SK-N-SH (cell line): ENCODE measurements at regions of chr12 and their contacts with region 1.

Region 1: DNA sequence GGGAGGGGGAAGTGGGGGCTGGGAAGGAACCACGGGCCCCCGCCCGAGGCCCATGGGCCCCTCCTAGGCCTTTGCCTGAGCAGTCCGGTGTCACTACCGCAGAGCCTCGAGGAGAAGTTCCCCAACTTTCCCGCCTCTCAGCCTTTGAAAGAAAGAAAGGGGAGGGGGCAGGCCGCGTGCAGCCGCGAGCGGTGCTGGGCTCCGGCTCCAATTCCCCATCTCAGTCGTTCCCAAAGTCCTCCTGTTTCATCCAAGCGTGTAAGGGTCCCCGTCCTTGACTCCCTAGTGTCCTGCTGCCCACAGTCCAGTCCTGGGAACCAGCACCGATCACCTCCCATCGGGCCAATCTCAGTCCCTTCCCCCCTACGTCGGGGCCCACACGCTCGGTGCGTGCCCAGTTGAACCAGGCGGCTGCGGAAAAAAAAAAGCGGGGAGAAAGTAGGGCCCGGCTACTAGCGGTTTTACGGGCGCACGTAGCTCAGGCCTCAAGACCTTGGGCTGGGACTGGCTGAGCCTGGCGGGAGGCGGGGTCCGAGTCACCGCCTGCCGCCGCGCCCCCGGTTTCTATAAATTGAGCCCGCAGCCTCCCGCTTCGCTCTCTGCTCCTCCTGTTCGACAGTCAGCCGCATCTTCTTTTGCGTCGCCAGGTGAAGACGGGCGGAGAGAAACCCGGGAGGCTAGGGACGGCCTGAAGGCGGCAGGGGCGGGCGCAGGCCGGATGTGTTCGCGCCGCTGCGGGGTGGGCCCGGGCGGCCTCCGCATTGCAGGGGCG is at the start of gene GAPDH:
- DNase-seq: peak; percentile 94
- H3K4me3 ChIP-seq: peak within 1 kb of the TSS; percentile 93 to 97
- H3K27ac ChIP-seq: peak within 1 kb of the TSS; percentile 96 to 98
- H3K4me1 ChIP-seq: peaks cover 15 to 34% of the 10 kb centered on the region in 2 experiments; a peak in 3 of 4 replicates
- H3K27me3 ChIP-seq: no peaks in the 10 kb centered on the region
- CTCF ChIP-seq: no peak
- EP300 ChIP-seq: peak in 1 of 2 experiments; percentile 57; a peak in 2 of 4 replicates
- RAD21 ChIP-seq: no peak
- polyA plus RNA-seq, gene GAPDH: 7,875 and 8,077 TPM in 2 replicates

Region 2: DNA sequence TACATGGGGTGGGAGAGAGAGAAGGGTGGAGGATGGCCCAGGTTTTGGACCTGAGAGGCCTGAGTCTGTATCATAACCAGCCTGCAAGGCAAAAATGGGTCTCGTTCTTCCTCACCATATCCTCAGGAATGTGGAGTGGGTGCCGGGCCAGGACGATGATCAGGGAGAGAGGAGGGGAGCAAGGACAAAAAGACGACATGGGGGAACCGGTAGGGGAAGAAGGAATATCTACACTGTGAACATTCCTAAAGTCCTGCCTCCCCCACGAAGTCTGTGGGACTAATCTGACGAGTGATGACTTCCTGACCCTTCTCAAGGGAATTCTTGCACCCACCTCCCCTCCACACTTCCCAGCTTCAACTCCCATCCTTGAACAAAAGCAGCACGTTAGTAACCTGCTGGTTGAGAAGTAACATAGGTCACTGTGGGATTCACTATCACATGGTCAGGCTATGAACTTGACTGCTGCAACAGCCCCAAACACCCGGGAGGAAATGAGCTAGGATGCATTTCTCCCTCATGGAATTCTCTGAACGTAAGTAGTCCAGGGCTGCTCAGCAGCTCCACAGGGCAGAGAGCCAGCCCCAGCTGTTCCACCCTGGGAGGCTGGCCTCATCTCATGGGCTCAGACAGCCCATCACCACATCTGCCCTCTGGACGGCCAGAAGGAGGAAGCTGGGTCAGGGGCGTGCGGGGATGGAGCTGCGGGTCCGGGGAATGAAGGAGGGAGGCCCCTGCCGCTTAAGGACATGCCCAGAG is 372.8 kb before region 1 on chr12:
- CTCF ChIA-PET with region 1: no interaction called
- POLR2A ChIA-PET with region 1: no interaction called
- DNase-seq: peak; percentile 36
- H3K4me3 ChIP-seq: no peak overlapping the region
- H3K27ac ChIP-seq: peak overlapping the region in 1 of 2 experiments; percentile 67; a peak in 1 of 4 replicates
- H3K4me1 ChIP-seq: peaks cover 0 to 27% of the 10 kb centered on the region in 2 experiments; a peak in 1 of 4 replicates
- H3K27me3 ChIP-seq: no peaks in the 10 kb centered on the region
- CTCF ChIP-seq: no peak
- EP300 ChIP-seq: no peak
- RAD21 ChIP-seq: no peak

Region 3: DNA sequence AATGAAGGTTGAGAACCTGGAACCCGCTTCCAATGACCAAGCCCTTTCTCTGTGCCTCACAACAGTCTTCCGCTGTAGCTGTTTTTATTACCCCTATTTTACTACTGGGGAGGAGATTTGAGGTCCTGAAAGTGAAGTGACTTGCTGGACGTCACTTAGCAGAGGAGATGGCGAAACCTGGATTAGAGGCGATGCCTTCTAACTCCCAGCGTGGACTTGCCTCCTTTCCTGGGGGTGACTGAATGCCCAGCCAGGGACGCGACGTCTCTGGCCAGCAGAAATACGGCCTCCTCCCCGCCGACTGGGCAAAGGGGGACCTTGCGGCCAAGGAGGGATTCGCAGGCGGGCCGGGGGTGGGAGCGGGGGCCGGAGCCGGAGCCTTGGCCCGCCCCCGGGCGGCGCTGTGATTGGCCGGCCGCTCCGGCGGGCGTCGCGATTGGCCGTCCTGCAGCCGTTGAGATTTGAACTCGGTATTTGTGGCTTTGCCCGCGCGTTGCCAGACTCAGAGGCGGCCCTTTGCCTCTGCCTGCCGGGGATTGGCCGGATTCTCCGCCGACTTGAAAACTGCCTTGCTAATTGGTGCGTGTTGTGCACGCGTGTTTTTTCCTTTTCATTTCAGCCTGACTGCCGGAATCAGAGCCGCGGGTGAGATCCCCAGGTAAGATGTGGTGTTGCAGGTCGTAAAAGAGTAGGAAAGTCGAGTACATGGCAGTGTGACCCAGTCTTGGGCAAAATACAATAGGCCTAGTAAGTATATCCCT is 40.4 kb before region 1 on chr12 and contains the start of gene NCAPD2:
- CTCF ChIA-PET with region 1: interaction called, 11 read pairs
- POLR2A ChIA-PET with region 1: interaction called, 30 read pairs
- DNase-seq: peak; percentile 97
- H3K4me3 ChIP-seq: peak within 1 kb of the TSS; percentile 81 to 97
- H3K27ac ChIP-seq: peak within 1 kb of the TSS; percentile 97 to 99
- H3K4me1 ChIP-seq: peaks cover 13 to 18% of the 10 kb centered on the region in 2 experiments; a peak in 3 of 4 replicates
- H3K27me3 ChIP-seq: no peaks in the 10 kb centered on the region
- CTCF ChIP-seq: peak; percentile 37
- EP300 ChIP-seq: no peak
- RAD21 ChIP-seq: no peak
- polyA plus RNA-seq, gene NCAPD2: 39.8 and 46.9 TPM in 2 replicates

Region 4: GRCh38 chr12:6554168-6555017 is 20.3 kb after region 1 on chr12:
- CTCF ChIA-PET with region 1: interaction called, 228 read pairs
- POLR2A ChIA-PET with region 1: interaction called, 73 read pairs
- DNase-seq: peak; percentile 89
- H3K4me3 ChIP-seq: peak overlapping the region; percentile 79 to 85
- H3K27ac ChIP-seq: peak overlapping the region; percentile 70 to 93; a peak in 3 of 4 replicates
- H3K4me1 ChIP-seq: peaks cover 36 to 40% of the 10 kb centered on the region in 2 experiments
- H3K27me3 ChIP-seq: no peaks in the 10 kb centered on the region
- CTCF ChIP-seq: peak; percentile 69
- EP300 ChIP-seq: no peak
- RAD21 ChIP-seq: peak; percentile 51

Region 5: GRCh38 chr12:6613776-6614512 is 79.8 kb after region 1 on chr12:
- CTCF ChIA-PET with region 1: no interaction called
- POLR2A ChIA-PET with region 1: interaction called, 17 read pairs
- DNase-seq: peak; percentile 88
- H3K4me3 ChIP-seq: no peak overlapping the region; a peak in 1 of 4 replicates
- H3K27ac ChIP-seq: peak overlapping the region; percentile 91 to 100
- H3K4me1 ChIP-seq: peaks cover 26 to 35% of the 10 kb centered on the region in 2 experiments
- H3K27me3 ChIP-seq: no peaks in the 10 kb centered on the region
- CTCF ChIP-seq: peak; percentile 43
- EP300 ChIP-seq: no peak
- RAD21 ChIP-seq: 0 out of 2 replicates have a peak, but pooled peaks have one; percentile 30